CD14-positive monocyte (primary cell): ENCODE measurements at regions of chr4 and their contacts with region 1.

Region 1: DNA sequence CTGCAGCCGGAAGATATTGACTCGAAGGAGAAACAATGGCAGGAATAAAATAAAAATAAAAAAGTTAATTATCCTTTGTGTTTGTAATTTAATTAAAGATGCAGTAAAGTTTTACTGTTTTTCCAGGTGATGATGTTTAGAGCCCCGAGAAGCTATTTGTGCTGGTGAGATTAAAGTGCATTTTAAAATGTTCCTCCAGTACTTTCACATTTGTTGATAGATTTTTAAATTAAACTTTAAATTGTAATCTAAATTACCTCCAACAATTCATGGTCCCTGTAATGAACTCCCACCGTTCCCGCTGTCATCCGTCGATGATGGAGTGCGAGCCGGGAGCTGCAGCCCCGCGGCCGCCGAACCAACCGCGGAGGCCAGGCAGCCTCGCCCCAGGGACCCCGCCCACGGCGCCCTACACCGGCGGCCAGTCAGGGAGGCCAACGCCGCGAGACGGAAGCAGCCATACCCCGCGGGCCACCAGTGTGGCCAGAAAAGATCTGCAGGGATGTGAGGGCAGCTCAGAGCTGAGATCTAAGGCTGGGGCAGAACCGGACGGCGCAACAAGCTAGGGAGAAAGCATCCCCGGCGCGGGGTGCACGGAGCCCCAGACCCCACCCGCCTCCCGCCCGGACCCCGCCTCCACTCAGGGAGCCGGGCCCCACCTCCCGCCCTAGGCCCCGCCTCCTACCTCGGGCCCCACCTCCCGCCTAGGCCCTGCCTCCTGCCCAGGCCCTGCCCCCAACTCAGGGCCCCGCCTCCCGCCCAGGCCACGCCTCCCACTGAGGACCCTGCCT is 104.0 kb downstream of the FAM53A start:
- DNase-seq: peak in 2 of 3 donors; percentile 86 to 98
- H3K4me3 ChIP-seq: peak overlapping the region; percentile 45 to 93 (median 74)
- H3K4me3 Mint-ChIP-seq: peak overlapping the region; percentile 79 to 87
- H3K27ac ChIP-seq: peak overlapping the region; percentile 79 to 86
- H3K27ac Mint-ChIP-seq: peak overlapping the region; percentile 85 to 93 (median 90)
- H3K4me1 ChIP-seq: peaks cover 13 to 15% of the 10 kb centered on the region in 2 donors
- H3K4me1 Mint-ChIP-seq: peaks cover 8% of the 10 kb centered on the region
- H3K27me3 ChIP-seq: no peaks in the 10 kb centered on the region
- H3K27me3 Mint-ChIP-seq: peaks cover 0 to 9% (median 1%) of the 10 kb centered on the region in 3 donors
- CTCF ChIP-seq: no peak

Region 2: GRCh38 chr4:683982-684622 is 896.0 kb before region 1 on chr4:
- intact Hi-C with region 1: loop called in 1 of 2 experiments (anchors 5 kb)
- DNase-seq: peak; percentile 50 to 62 (median 54)
- H3K4me3 ChIP-seq: no peak overlapping the region
- H3K4me3 Mint-ChIP-seq: no peak overlapping the region
- H3K27ac ChIP-seq: peak overlapping the region in 1 of 2 donors; percentile 5
- H3K27ac Mint-ChIP-seq: peak overlapping the region in 3 of 7 donors; percentile 25 to 48 (median 33)
- H3K4me1 ChIP-seq: peaks cover 47 to 56% of the 10 kb centered on the region in 2 donors
- H3K4me1 Mint-ChIP-seq: peaks cover 45% of the 10 kb centered on the region
- H3K27me3 ChIP-seq: no peaks in the 10 kb centered on the region
- H3K27me3 Mint-ChIP-seq: peaks cover 1 to 13% (median 8%) of the 10 kb centered on the region in 3 donors
- CTCF ChIP-seq: peak; percentile 97

Region 3: DNA sequence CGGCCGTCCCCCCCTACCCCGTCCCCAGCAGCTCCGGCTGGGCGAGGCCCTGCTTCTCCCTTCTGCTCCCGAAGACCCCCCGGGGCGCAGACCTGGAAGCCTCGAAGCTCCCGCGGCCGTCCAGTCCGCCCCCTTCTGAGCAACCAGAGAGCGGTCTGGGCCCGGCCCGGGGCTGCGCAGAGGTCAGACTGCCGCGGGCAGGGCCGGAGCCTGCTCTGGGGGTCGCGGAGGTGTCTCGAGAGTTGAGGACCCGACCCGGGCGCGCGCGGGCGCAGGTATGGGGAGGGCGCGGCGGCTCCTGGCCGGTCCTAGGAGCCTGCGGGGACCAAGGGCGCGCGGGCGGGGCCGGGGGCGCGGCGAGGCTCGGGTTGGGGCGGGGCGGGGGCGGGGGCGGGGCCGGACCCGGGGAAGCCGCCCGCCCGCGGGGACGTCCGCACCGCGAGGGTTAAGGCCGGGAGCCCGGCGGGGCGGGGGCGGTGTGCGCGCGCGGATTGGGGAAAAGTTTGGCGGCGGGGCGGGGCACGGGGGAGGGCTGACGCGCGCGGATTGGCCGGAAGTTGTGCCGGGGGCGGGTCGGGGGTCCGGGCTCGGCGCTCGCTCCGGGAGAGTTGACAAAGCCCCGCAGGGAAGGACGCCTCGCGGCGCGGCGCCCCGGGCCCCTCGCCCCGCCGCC is 568.9 kb before region 1 on chr4 and contains the start of gene FGFRL1:
- intact Hi-C with region 1: loop called (anchors 10 kb)
- DNase-seq: peak; percentile 71 to 85 (median 84)
- H3K4me3 ChIP-seq: peak within 1 kb of the TSS; percentile 34 to 82 (median 60)
- H3K4me3 Mint-ChIP-seq: peak within 1 kb of the TSS; percentile 83 to 89
- H3K27ac ChIP-seq: peak within 1 kb of the TSS; percentile 48 to 82
- H3K27ac Mint-ChIP-seq: peak within 1 kb of the TSS; percentile 54 to 90 (median 79)
- H3K4me1 ChIP-seq: peaks cover 23 to 43% of the 10 kb centered on the region in 2 donors
- H3K4me1 Mint-ChIP-seq: peaks cover 18% of the 10 kb centered on the region
- H3K27me3 ChIP-seq: peaks cover 4 to 41% of the 10 kb centered on the region in 2 donors
- H3K27me3 Mint-ChIP-seq: peaks cover 27 to 40% (median 30%) of the 10 kb centered on the region in 3 donors
- CTCF ChIP-seq: no peak
- polyA plus RNA-seq, gene FGFRL1: 0.17 to 77.7 (median 0.28) TPM

Region 4: GRCh38 chr4:1644891-1645657 is 65.0 kb after region 1 on chr4:
- intact Hi-C with region 1: no loop called
- DNase-seq: no peak
- H3K4me3 ChIP-seq: no peak overlapping the region
- H3K4me3 Mint-ChIP-seq: no peak overlapping the region
- H3K27ac ChIP-seq: no peak overlapping the region
- H3K27ac Mint-ChIP-seq: no peak overlapping the region
- H3K4me1 ChIP-seq: no peaks in the 10 kb centered on the region
- H3K4me1 Mint-ChIP-seq: no peaks in the 10 kb centered on the region
- H3K27me3 ChIP-seq: no peaks in the 10 kb centered on the region
- H3K27me3 Mint-ChIP-seq: peaks cover 0 to 5% (median 3%) of the 10 kb centered on the region in 3 donors
- CTCF ChIP-seq: no peak

Region 5: DNA sequence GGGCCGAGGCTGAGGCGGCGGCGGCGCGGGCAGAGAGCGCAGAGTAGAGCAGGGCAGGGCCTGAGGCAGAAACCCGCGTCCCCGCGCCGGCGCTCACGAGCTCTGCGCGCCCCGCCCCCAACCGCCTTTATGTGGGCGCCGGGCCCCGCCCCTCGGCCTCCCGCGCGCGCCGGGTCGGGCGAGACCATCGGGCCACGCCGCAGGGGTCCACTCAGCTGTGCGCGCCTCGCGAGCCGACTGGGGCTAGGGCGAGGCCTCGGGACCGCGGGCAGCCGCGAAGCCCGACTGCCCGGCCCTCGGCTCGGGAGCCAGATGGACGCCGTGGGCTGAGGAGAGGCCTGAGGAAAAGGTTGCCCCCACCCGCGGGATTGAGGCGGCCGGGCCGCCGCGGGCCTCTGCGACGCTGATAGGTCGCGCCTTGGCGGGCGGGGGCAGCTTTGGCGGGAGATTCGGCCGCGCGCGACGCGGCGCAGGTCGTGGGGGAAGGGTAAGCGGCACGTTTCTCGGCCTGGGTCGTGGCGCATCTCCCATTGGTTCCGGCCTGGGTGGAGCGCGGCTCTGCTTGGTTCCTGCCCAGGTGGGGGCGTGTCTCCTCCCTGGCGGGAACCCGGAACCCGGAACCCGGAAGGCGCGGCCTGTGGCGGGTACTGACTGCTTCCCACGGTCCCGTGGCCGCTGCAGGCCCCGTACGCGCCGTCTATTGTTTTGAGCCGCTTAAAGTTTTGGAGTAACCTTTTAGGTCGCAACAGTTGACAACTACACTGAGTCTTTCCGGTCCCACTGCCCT is 132.3 kb after region 1 on chr4 and contains the start of gene SLBP:
- intact Hi-C with region 1: loop called in 1 of 2 experiments (anchors 10 kb)
- DNase-seq: peak; percentile 97 to 99 (median 98)
- H3K4me3 ChIP-seq: peak within 1 kb of the TSS; percentile 73 to 91 (median 88)
- H3K4me3 Mint-ChIP-seq: peak within 1 kb of the TSS; percentile 97 to 98
- H3K27ac ChIP-seq: peak within 1 kb of the TSS; percentile 68 to 92
- H3K27ac Mint-ChIP-seq: peak within 1 kb of the TSS; percentile 95 to 99 (median 97)
- H3K4me1 ChIP-seq: peaks cover 48 to 61% of the 10 kb centered on the region in 2 donors
- H3K4me1 Mint-ChIP-seq: peaks cover 59% of the 10 kb centered on the region
- H3K27me3 ChIP-seq: no peaks in the 10 kb centered on the region
- H3K27me3 Mint-ChIP-seq: no peaks in the 10 kb centered on the region
- CTCF ChIP-seq: no peak
- polyA plus RNA-seq, gene SLBP: 39.6 to 63.7 (median 59.1) TPM

Region 6: DNA sequence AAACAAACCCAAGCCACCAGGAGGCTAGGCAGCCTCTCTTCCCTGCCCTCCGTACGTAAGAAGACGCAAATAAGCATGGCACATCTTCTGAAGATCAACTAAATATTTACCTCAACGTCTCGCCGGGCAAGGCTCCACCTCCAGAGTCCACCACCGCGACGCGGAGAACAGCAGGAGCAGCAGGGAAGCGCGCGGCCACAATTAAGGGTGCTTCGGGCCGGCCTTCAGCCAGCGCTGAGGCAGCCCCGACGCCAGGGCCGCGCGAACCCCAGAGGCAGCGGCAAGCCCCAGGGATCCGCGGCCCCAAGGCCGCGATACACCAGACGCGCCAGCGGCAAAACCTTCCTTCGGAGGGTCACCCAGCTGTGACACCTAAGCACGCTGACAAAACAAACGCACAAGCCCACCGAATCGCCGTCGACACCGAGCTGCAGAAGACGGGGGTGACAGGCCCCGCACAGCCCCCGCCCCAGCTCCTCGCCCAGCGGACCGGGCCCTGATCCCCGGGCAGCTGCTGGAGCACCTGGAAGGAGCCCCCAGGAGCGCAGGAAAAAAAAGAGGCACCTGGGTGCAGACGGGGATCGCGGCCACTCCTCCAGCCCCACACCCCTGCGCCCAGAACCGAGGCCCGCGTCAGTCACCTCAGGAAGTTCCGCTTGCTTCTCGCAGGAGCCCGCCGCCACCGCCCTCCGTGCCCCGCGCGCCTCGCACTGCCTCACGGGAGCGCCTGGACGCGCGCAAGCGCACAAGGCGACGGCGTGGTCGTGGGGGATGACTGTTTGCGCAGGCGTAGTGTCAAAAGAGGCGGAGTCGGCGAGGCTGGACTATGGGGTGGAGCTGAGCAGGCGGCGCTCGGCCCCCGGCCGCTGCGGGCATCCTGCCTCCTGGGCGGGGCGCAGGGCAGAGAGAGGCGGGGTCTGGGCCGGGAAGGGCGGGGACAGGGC is 661.6 kb after region 1 on chr4 and contains the starts of genes HAUS3 and POLN:
- intact Hi-C with region 1: loop called (anchors 5 to 10 kb)
- DNase-seq: peak; percentile 98 to 99 (median 98)
- H3K4me3 ChIP-seq: peak within 1 kb of the TSS; percentile 61 to 93 (median 86)
- H3K4me3 Mint-ChIP-seq: peak within 1 kb of the TSS; percentile 88 to 95
- H3K27ac ChIP-seq: peak within 1 kb of the TSS; percentile 43 to 86
- H3K27ac Mint-ChIP-seq: peak within 1 kb of the TSS; percentile 86 to 94 (median 91)
- H3K4me1 ChIP-seq: peaks cover 40 to 61% of the 10 kb centered on the region in 2 donors
- H3K4me1 Mint-ChIP-seq: peaks cover 60% of the 10 kb centered on the region
- H3K27me3 ChIP-seq: no peaks in the 10 kb centered on the region
- H3K27me3 Mint-ChIP-seq: no peaks in the 10 kb centered on the region
- CTCF ChIP-seq: no peak
- polyA plus RNA-seq, gene HAUS3: 4.4 to 5.5 (median 5.0) TPM
- polyA plus RNA-seq, gene POLN: 0.08 to 0.33 (median 0.28) TPM